ENCODE measurements at regions of chr17 and their contacts with region 1.

Region 1: GRCh38 chr17:33520426-33521330 is 227.6 kb upstream of the ASIC2 start:
- DNase-seq: peak; percentile 73
- CTCF ChIP-seq: peak; percentile 62

Region 2: GRCh38 chr17:33451221-33451620 is 69.5 kb before region 1 on chr17:
- CTCF ChIA-PET with region 1: no interaction called
- POLR2A ChIA-PET with region 1: no interaction called
- DNase-seq: no peak
- CTCF ChIP-seq: no peak

Region 3: DNA sequence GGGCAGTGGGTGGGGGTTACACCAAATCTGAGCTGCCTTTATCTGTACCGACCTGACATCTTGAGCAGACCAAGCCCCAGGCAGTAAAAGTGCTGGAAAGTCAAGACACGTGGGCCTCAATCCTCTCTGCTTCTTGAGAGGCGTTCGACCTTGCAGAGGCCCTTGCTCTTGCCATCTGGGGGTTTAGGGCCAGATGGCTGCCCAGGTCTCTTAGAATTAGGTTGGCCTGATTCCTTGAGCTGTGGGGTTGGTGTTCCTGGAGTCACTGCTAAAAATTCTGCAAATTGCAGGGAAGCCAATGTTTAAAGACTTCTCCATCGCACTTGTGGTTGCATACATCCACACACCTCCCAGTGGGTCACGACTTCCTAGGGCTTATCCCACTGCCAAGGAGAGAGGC is 10.6 kb after region 1 on chr17:
- CTCF ChIA-PET with region 1: interaction called, 23 read pairs
- POLR2A ChIA-PET with region 1: no interaction called
- DNase-seq: no peak
- CTCF ChIP-seq: no peak